Esophagus muscularis mucosa (tissue), 4 donors: ENCODE measurements at regions of chr2 and their contacts with region 1.

Region 1: DNA sequence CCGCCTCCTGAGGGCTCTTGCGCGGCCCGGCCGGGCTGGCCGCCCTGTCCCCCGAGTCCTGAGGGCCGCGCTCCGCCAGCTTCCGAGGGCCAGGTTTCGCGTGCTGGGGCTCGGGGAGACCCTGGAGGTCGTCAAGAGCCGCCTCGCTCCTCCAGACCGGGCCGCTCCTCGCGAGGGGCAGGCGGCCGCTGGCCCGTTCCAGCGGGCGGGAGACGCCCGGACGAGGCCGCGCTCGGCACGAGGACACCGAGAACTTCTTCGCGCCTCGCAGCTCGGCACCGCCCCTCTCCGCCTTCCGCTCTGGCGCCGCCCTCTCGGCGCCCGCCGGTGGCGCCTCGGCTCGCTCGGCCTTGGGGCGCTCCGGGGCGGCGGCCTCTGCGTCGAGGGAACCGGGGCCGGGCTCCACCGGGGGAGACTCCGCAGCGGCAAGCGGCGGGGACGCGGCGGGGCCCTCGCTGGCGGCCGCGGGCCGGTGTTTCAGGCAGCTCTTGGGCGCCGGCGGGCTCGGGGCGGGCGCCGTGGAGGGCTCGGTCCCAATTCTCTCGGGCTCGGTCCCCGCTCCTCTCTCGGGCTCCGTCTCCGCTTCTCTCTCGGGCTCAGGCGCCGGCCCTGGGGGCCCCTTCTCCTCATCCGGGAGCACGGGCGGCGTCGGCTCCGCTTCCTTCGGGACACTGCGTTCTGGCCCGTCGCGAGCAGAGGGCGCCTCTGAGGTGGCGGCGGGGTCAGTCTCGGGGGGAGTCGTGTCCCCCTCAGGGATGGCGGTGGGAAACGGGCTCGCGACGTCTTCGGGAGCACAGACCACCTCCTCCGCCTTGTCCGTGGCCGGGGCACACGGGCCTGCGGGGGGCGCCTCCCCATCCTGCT is 91.6 kb upstream of the MGAT4A start:
- DNase-seq: peak; percentile 90
- H3K4me3 ChIP-seq: peak overlapping the region; percentile 55 to 64 (median 58)
- H3K27ac ChIP-seq: peak overlapping the region; percentile 66 to 81 (median 74)
- H3K4me1 ChIP-seq: peaks cover 19 to 33% (median 25%) of the 10 kb centered on the region in 4 donors
- H3K27me3 ChIP-seq: peaks cover 0 to 29% (median 13%) of the 10 kb centered on the region in 4 donors
- CTCF ChIP-seq: peak in 2 of 3 experiments; percentile 25 to 34
- EP300 ChIP-seq: no peak
- POLR2A ChIP-seq: no peak

Region 2: DNA sequence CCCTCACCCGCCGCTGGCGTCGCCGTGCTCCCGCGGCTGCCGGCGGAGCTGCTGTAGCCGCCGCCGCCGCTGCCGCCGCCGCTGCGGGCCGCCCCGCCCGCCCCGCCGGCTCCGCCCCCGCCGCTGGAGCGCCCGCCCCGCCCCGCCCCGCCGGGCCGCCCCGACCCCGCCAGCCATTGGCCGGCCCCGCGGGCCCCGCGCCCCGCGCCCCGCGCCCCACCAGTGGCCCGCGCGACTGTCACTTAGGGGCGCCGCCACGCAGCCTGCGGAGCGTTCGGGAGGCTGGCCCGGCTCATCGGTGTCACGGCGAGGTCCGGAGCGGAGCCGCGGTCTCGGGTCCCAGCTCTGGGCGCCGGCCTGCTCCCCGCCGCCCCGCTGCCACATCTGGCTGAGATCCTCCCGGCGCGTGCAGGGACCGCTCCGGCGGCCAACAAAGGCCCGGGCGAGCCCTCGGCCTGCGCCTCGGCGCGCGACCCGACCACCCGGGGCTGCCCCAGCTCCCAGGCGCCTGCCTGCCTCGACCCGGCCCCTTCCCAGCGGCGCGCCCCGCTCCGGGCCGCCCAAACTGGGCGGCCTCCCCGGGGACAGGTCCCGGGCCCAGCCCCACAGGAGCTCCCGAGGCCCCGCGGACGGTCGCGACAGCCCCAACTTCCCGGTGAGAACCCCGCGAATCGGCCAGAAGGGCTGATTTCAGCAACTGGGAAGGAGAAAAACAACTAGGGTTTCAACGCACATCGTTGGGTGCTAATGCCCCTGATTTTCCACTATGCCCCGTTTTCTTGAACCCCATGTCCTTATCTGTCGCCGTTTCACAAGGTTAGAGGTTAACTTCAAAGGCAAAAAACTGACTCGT is 91.3 kb before region 1 on chr2 and contains the start of gene MGAT4A:
- intact Hi-C with region 1: loop called (anchors 5 kb)
- DNase-seq: no peak
- H3K4me3 ChIP-seq: peak within 1 kb of the TSS; percentile 69 to 97 (median 95)
- H3K27ac ChIP-seq: peak within 1 kb of the TSS; percentile 83 to 95 (median 94)
- H3K4me1 ChIP-seq: peaks cover 29 to 49% (median 45%) of the 10 kb centered on the region in 4 donors
- H3K27me3 ChIP-seq: no peaks in the 10 kb centered on the region
- CTCF ChIP-seq: no peak
- EP300 ChIP-seq: no peak
- POLR2A ChIP-seq: peak; percentile 53
- total RNA-seq, gene MGAT4A: 9.9 to 21.4 (median 15.2) TPM